Left cardiac atrium (tissue), 4 donors: ENCODE measurements at regions of chr3 and their contacts with region 1.

Region 1: DNA sequence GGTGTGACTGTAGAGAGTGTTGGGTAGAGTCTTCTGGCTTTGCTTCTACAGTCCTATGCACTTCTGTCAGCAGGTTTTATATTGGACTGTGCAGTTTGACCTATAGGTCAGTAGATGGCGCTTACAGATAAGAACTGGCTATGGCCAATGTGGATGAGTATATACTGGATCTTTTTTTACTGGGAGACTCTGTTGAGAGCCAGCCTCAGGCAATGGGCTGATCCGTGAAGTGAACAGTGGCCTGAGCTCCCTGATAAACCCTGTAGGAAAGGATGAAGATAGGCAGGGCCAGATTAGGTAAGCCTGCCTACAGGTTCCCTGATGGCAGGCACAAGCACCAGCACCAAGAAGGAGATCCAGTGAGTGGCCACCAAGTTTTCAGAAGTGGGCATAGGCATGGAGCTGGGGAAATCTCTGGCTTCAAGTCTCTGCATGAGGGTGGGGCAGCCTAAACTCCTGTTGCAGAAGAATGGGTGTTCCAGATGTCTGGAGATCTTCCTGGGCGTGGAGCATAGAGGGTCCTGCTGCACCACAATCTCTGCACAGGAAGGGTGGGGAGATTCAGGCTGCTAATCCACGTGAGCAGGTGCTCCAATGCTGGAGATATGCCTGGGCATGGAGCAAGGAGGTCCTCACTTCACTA is 326.0 kb upstream of the SGO1 start:
- DNase-seq: no peak
- ATAC-seq: peak; percentile 89 to 90

Region 2: GRCh38 chr3:20604659-20605058 is 92.7 kb after region 1 on chr3:
- intact Hi-C with region 1: no loop called
- DNase-seq: no peak
- ATAC-seq: no peak

Region 3: GRCh38 chr3:20739814-20740213 is 227.8 kb after region 1 on chr3:
- intact Hi-C with region 1: loop called (anchors 2 to 5 kb)
- DNase-seq: no peak
- ATAC-seq: peak in 1 of 2 donors; percentile 34

Region 4: GRCh38 chr3:20776692-20777091 is 264.7 kb after region 1 on chr3:
- intact Hi-C with region 1: no loop called
- DNase-seq: no peak
- ATAC-seq: peak in 1 of 2 donors; percentile 43